ENCODE measurements at regions of chr4 and their contacts with region 1.

Region 1: DNA sequence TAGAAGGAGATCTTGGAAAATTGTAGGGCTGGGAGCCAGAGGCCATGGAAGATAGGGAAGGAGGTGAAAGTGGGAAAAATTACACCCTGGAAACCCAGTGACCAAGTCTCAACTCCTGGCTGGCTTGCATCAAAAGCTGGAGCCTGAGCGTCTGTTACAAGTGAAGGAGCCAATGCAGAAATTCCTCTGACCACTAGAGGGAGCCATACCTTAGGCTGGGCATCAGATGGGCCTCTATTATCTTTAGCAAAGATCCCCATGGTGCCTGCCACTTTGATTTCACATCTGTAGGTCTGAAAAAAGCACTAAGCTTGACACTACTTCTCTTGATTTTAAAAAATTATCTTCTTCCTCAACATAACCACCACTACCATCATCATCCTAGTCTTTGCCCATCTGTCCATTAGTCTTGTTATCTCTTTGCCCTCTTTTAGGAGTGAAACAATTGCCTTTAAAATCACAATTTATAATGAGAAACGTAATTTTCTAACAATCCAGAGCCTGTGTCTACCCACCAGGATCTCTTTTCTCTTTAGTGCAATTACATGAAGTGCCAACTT is 62.9 kb downstream of the ANAPC4 start:
- DNase-seq: peak; percentile 41
- H3K4me3 ChIP-seq: no peak overlapping the region
- H3K27ac ChIP-seq: no peak overlapping the region
- H3K4me1 ChIP-seq: no peaks in the 10 kb centered on the region
- H3K27me3 ChIP-seq: no peaks in the 10 kb centered on the region
- CTCF ChIP-seq: peak; percentile 92 to 93

Region 2: GRCh38 chr4:25466966-25467697 is 27.1 kb after region 1 on chr4:
- CTCF ChIA-PET with region 1: no interaction called
- dilution Hi-C with region 1: no loop called
- in situ Hi-C with region 1: no loop called
- intact Hi-C with region 1: no loop called
- DNase-seq: no peak
- H3K4me3 ChIP-seq: no peak overlapping the region
- H3K27ac ChIP-seq: no peak overlapping the region
- H3K4me1 ChIP-seq: no peaks in the 10 kb centered on the region
- H3K27me3 ChIP-seq: no peaks in the 10 kb centered on the region
- CTCF ChIP-seq: no peak

Region 3: GRCh38 chr4:25760518-25761157 is 320.6 kb after region 1 on chr4:
- CTCF ChIA-PET with region 1: no interaction called
- dilution Hi-C with region 1: no loop called
- in situ Hi-C with region 1: loop called (anchors 5 to 10 kb)
- intact Hi-C with region 1: no loop called
- DNase-seq: no peak
- H3K4me3 ChIP-seq: no peak overlapping the region
- H3K27ac ChIP-seq: no peak overlapping the region
- H3K4me1 ChIP-seq: no peaks in the 10 kb centered on the region
- H3K27me3 ChIP-seq: no peaks in the 10 kb centered on the region
- CTCF ChIP-seq: no peak

Region 4: GRCh38 chr4:25792200-25792791 is 352.3 kb after region 1 on chr4:
- CTCF ChIA-PET with region 1: interaction called, 3 read pairs
- dilution Hi-C with region 1: no loop called
- in situ Hi-C with region 1: no loop called
- intact Hi-C with region 1: loop called (anchors 1 kb)
- DNase-seq: no peak
- H3K4me3 ChIP-seq: no peak overlapping the region
- H3K27ac ChIP-seq: no peak overlapping the region
- H3K4me1 ChIP-seq: peaks cover 15% of the 10 kb centered on the region
- H3K27me3 ChIP-seq: no peaks in the 10 kb centered on the region
- CTCF ChIP-seq: peak; percentile 50 to 68

Region 5: GRCh38 chr4:25913851-25914669 is 474.1 kb after region 1 on chr4 and contains the start of gene SMIM20:
- CTCF ChIA-PET with region 1: no interaction called
- dilution Hi-C with region 1: no loop called
- in situ Hi-C with region 1: loop called in 1 of 2 experiments (anchors 25 kb)
- intact Hi-C with region 1: loop called (anchors 10 kb)
- DNase-seq: peak; percentile 88
- H3K4me3 ChIP-seq: peak within 1 kb of the TSS; percentile 63 to 84 (median 68)
- H3K27ac ChIP-seq: peak within 1 kb of the TSS; percentile 73
- H3K4me1 ChIP-seq: peaks cover 4% of the 10 kb centered on the region
- H3K27me3 ChIP-seq: no peaks in the 10 kb centered on the region
- CTCF ChIP-seq: no peak
- total RNA-seq, gene SMIM20: 17.3 to 19.7 TPM

Region 6: DNA sequence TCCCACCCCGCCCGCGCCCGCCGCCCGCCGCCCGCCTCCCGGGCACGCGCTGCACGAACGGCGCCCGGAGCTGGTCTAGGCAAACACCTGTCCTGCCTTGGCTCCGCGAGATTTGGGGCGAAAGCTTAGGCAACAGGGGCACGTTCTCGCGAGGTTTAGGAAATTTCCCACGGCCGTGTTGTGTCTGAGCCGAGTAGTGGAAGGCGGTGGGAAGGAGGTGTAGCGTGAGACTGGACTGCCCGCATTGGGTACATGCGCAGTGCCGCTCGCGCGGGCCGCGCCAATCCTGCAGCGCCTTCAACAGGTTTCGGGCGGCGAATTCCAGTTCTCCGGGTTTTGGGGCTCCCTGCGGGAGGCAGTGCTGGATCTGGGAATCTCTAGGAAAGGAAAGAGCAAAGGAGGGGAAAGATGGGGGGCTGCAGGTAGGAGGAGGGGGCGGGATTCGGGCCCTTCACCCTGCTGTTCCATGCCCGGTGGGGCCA is 879.5 kb after region 1 on chr4:
- CTCF ChIA-PET with region 1: no interaction called
- dilution Hi-C with region 1: no loop called
- in situ Hi-C with region 1: no loop called
- intact Hi-C with region 1: loop called (anchors 2 kb)
- DNase-seq: peak; percentile 99
- H3K4me3 ChIP-seq: peak overlapping the region; percentile 68 to 90 (median 86)
- H3K27ac ChIP-seq: peak overlapping the region; percentile 79
- H3K4me1 ChIP-seq: peaks cover 15% of the 10 kb centered on the region
- H3K27me3 ChIP-seq: no peaks in the 10 kb centered on the region
- CTCF ChIP-seq: peak in 1 of 2 donors; percentile 3

Measured in mammary epithelial cell (primary cell).